Sigmoid colon (tissue), 7 donors: ENCODE measurements at regions of chr4 and their contacts with region 1.

Region 1: GRCh38 chr4:118888666-118889311 is at the start of gene SYNPO2:
- DNase-seq: peak; percentile 97
- H3K4me3 ChIP-seq: peak within 1 kb of the TSS; percentile 69 to 76 (median 72)
- H3K27ac ChIP-seq: peak within 1 kb of the TSS; percentile 83 to 90 (median 90)
- H3K4me1 ChIP-seq: peaks cover 0 to 13% (median 4%) of the 10 kb centered on the region in 4 donors
- H3K27me3 ChIP-seq: no peaks in the 10 kb centered on the region
- CTCF ChIP-seq: no peak
- EP300 ChIP-seq: peak in 1 of 4 donors; percentile 38
- POLR2A ChIP-seq: peak; percentile 89 to 98
- total RNA-seq, gene SYNPO2: 611 to 1,591 (median 1,204) TPM

Region 2: DNA sequence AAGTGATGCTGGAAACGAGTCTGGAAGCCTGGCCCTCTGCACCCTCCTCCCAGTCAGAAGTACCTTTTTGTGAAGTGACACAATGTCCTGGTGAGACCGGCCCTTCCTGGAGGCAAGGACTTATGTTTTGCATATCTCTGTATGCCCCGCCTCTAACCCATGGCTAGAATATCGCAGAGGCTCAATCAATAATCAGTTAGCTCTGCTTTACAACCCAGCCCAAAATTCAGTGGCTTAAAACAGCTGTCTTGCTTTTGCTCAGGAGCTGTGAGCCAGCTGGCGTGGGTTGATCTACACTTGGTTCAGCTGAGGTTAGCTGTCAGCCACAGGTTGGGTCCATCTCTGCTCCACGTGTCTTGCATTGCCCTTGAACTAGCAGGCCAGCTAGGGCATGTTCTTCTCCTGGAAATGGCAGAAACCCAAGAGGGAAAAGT is 302.4 kb before region 1 on chr4:
- intact Hi-C with region 1: no loop called
- DNase-seq: peak; percentile 77
- H3K4me3 ChIP-seq: no peak overlapping the region
- H3K27ac ChIP-seq: peak overlapping the region in 3 of 4 donors; percentile 35 to 45 (median 44)
- H3K4me1 ChIP-seq: no peaks in the 10 kb centered on the region
- H3K27me3 ChIP-seq: peaks cover 0 to 18% (median 0%) of the 10 kb centered on the region in 3 donors
- CTCF ChIP-seq: no peak
- EP300 ChIP-seq: no peak
- POLR2A ChIP-seq: no peak

Region 3: DNA sequence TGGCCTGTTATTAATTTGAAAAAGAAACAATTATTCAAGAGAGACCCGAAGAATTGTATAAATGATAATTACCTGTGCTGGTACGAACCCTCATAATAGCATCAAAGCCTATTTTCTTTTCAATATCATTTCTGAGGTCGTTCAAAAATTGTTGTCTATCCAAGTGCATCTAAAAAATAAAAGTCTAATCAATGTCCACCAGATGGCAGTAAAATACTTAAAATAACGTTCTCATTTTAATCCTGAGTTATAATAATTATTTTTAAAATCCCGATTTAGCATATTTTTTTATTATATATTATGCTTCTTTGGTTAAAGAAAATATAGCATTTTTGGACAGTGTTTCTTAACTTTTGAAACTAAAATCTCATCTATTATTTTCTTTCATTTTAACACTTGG is 147.9 kb before region 1 on chr4:
- intact Hi-C with region 1: loop called (anchors 2 kb)
- DNase-seq: no peak
- H3K4me3 ChIP-seq: peak overlapping the region; percentile 11 to 21 (median 16)
- H3K27ac ChIP-seq: peak overlapping the region; percentile 48 to 88 (median 85)
- H3K4me1 ChIP-seq: peaks cover 0 to 93% (median 56%) of the 10 kb centered on the region in 4 donors
- H3K27me3 ChIP-seq: no peaks in the 10 kb centered on the region
- CTCF ChIP-seq: peak in 2 of 4 experiments; percentile 20 to 47
- EP300 ChIP-seq: no peak
- POLR2A ChIP-seq: no peak

Region 4: DNA sequence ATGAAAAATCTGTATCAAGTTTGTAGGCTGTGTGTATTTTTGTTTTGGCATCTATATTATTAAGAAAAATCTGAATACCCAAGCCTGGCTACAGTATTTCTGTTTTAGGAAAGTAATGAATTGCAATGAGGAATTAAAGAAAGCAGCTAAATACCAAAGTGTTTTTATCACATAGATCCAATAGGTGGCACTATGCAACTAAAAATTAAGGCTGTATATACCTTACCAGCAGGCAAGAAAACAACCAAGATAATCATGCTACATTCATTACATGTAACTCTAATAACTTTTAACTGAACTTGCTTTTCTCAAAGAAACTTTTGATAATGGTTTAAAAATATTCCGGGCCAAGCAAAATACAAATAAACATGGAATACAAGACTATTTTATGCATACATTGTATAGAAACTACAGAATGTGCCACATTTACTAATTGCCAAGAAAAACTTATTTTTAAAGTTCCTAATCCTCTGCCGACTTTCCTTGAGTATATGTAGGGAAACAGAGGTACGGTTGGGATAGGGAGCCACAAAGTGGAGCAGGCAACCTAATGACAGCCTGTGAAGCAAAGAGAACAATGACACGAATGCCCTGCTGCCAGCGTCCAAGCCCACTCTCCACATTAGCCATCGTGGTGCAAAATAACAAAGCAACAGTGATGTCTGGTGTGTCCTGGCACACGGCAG is 116.6 kb before region 1 on chr4:
- intact Hi-C with region 1: loop called (anchors 2 kb)
- DNase-seq: no peak
- H3K4me3 ChIP-seq: peak overlapping the region in 3 of 4 donors; percentile 10 to 28 (median 22)
- H3K27ac ChIP-seq: peak overlapping the region; percentile 83 to 88 (median 85)
- H3K4me1 ChIP-seq: peaks cover 0 to 68% (median 51%) of the 10 kb centered on the region in 4 donors
- H3K27me3 ChIP-seq: no peaks in the 10 kb centered on the region
- CTCF ChIP-seq: peak; percentile 47 to 68 (median 64)
- EP300 ChIP-seq: no peak
- POLR2A ChIP-seq: no peak

Region 5: DNA sequence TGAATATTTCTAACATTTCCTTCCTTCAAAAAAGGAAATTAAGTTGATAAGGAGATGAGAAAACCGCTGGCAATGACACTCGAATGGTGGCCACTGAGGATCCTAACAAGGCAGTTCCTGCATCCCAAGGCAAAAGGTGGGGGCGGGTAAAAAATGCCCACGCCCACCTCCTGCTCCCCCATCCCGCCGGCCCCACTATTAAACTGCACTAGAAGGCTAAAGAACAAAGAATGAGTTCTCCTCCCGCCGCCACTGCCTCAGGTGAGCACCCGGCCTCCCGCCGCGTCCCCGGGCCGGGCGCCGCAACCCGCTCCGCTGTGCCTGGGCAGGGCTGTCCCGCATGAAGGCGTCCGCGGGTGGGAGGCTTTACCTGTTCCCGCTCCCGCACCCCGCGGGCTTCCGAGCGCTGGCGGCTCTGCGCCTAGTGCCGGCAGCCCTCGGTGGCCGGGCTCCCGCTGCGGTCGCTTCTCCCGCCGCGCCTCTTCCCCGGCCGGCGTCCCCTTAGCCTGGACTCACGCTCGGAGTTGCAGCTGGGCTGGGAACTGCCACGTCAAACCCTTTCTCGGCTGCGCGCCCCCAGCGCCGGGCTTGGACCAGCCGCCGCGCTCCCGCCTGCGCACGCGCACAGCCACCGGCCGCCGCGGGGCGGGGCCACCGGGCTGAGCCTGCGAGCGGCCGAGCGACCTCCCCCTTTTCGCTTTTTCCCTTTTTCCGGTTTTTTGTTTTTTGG is 53.1 kb before region 1 on chr4 and contains the start of gene SEC24D:
- intact Hi-C with region 1: loop called (anchors 5 kb)
- DNase-seq: peak; percentile 95
- H3K4me3 ChIP-seq: peak within 1 kb of the TSS; percentile 83 to 93 (median 89)
- H3K27ac ChIP-seq: peak within 1 kb of the TSS; percentile 96 to 98 (median 98)
- H3K4me1 ChIP-seq: peaks cover 0 to 37% (median 26%) of the 10 kb centered on the region in 4 donors
- H3K27me3 ChIP-seq: no peaks in the 10 kb centered on the region
- CTCF ChIP-seq: no peak
- EP300 ChIP-seq: no peak
- POLR2A ChIP-seq: peak; percentile 59 to 61
- total RNA-seq, gene SEC24D: 27.6 to 42.4 (median 33.4) TPM

Region 6: GRCh38 chr4:118968005-118968404 is 79.2 kb after region 1 on chr4:
- intact Hi-C with region 1: loop called (anchors 1 kb)
- DNase-seq: peak; percentile 89
- H3K4me3 ChIP-seq: peak overlapping the region in 2 of 4 donors; percentile 2 to 23
- H3K27ac ChIP-seq: peak overlapping the region; percentile 82 to 90 (median 86)
- H3K4me1 ChIP-seq: peaks cover 0 to 99% (median 93%) of the 10 kb centered on the region in 4 donors
- H3K27me3 ChIP-seq: no peaks in the 10 kb centered on the region
- CTCF ChIP-seq: no peak
- EP300 ChIP-seq: no peak
- POLR2A ChIP-seq: no peak

Region 7: GRCh38 chr4:119016636-119017035 is 127.8 kb after region 1 on chr4:
- intact Hi-C with region 1: no loop called
- DNase-seq: no peak
- H3K4me3 ChIP-seq: no peak overlapping the region
- H3K27ac ChIP-seq: peak overlapping the region; percentile 81 to 98 (median 89)
- H3K4me1 ChIP-seq: peaks cover 0 to 55% (median 36%) of the 10 kb centered on the region in 4 donors
- H3K27me3 ChIP-seq: no peaks in the 10 kb centered on the region
- CTCF ChIP-seq: no peak
- EP300 ChIP-seq: peak; percentile 66 to 98 (median 94)
- POLR2A ChIP-seq: no peak

Region 8: GRCh38 chr4:119299741-119300100 is 410.9 kb after region 1 on chr4:
- intact Hi-C with region 1: loop called (anchors 10 kb)
- DNase-seq: no peak
- H3K4me3 ChIP-seq: peak overlapping the region; percentile 56 to 87 (median 68)
- H3K27ac ChIP-seq: peak overlapping the region; percentile 85 to 93 (median 92)
- H3K4me1 ChIP-seq: peaks cover 0 to 29% (median 25%) of the 10 kb centered on the region in 4 donors
- H3K27me3 ChIP-seq: no peaks in the 10 kb centered on the region
- CTCF ChIP-seq: no peak
- EP300 ChIP-seq: no peak
- POLR2A ChIP-seq: no peak